Heart right ventricle (tissue), 16 donors: ENCODE measurements at regions of chr9 and their contacts with region 1.

Region 1: DNA sequence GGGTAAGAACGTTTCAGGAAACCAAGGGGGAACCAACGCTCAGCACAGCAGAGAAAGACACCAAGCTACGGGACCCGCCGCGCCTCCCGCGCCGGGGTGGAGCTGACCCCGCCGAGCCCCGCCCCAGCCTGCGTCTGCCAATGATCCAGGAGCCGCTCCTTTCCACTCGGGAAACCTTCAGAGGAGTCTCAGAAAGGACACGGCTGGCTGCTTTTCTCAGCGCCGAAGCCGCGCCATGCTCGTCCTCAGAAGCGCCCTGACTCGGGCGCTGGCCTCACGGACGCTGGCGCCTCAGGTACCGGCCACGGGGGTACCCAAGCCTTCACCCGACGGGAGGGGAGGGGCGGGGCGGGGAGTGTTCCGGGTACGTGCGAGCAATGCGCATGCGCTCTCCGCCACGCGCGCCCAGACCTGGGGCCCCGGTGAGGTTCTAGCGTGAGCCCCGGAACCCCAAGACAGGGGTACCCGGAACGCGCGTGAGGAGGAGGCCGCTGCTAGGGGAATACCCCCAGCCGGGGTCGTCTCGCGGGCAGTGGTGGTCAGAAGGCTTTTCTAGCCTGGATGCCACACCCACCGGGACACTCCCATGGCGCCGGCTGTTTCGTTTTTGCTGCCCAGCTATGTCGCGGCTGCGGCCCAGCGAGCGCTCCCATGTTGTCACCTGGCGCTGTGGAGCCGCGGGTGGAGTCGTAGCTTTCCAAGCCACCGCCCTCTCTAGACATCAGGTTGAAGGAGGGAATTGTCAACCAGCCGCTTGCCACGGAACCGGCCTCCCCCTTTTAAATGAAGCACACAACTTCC is at the start of gene NIPSNAP3A:
- DNase-seq: peak; percentile 87 to 88
- ATAC-seq: peak; percentile 95 to 98 (median 96)
- H3K4me3 ChIP-seq: peak within 1 kb of the TSS; percentile 66 to 92 (median 81)
- H3K27ac ChIP-seq: peak within 1 kb of the TSS; percentile 57 to 96 (median 90)
- H3K4me1 ChIP-seq: peaks cover 0 to 31% (median 16%) of the 10 kb centered on the region in 9 donors
- H3K27me3 ChIP-seq: no peaks in the 10 kb centered on the region
- CTCF ChIP-seq: no peak
- total RNA-seq, gene NIPSNAP3A: 19.9 to 34.9 (median 24.3) TPM

Region 2: GRCh38 chr9:103397868-103398600 is 1349.7 kb before region 1 on chr9:
- intact Hi-C with region 1: loop called in 1 of 10 experiments (anchors 10 kb)
- DNase-seq: no peak
- ATAC-seq: peak in 4 of 8 donors; percentile 25 to 53 (median 44)
- H3K4me3 ChIP-seq: no peak overlapping the region
- H3K27ac ChIP-seq: no peak overlapping the region
- H3K4me1 ChIP-seq: no peaks in the 10 kb centered on the region
- H3K27me3 ChIP-seq: no peaks in the 10 kb centered on the region
- CTCF ChIP-seq: peak in 8 of 9 donors; percentile 39 to 66 (median 61)

Region 3: GRCh38 chr9:104093647-104094533 is 653.9 kb before region 1 on chr9 and contains the start of gene SMC2:
- intact Hi-C with region 1: loop called in 3 of 10 experiments (anchors 5 to 10 kb)
- DNase-seq: peak; percentile 94
- ATAC-seq: peak; percentile 96 to 99 (median 98)
- H3K4me3 ChIP-seq: peak within 1 kb of the TSS; percentile 55 to 75 (median 70)
- H3K27ac ChIP-seq: peak within 1 kb of the TSS; percentile 76 to 99 (median 95)
- H3K4me1 ChIP-seq: peaks cover 4 to 39% (median 24%) of the 10 kb centered on the region in 9 donors
- H3K27me3 ChIP-seq: no peaks in the 10 kb centered on the region
- CTCF ChIP-seq: no peak
- total RNA-seq, gene SMC2: 7.6 to 22.2 (median 15.2) TPM